Mammary epithelial cell (primary cell): ENCODE measurements at regions of chr14 and their contacts with region 1.

Region 1: GRCh38 chr14:58297762-58298476 is 436 bp upstream of the ARID4A start:
- DNase-seq: peak; percentile 100
- H3K4me3 ChIP-seq: peak overlapping the region; percentile 94 to 96 (median 95)
- H3K27ac ChIP-seq: peak overlapping the region; percentile 84
- H3K4me1 ChIP-seq: peaks cover 10% of the 10 kb centered on the region
- H3K27me3 ChIP-seq: no peaks in the 10 kb centered on the region
- CTCF ChIP-seq: peak in 1 of 2 donors; percentile 12

Region 2: GRCh38 chr14:58244556-58245387 is 53.1 kb before region 1 on chr14 and contains the start of gene PSMA3:
- CTCF ChIA-PET with region 1: no interaction called
- dilution Hi-C with region 1: no loop called
- in situ Hi-C with region 1: no loop called
- intact Hi-C with region 1: loop called (anchors 2 kb)
- DNase-seq: peak; percentile 98
- H3K4me3 ChIP-seq: peak within 1 kb of the TSS; percentile 81 to 100 (median 96)
- H3K27ac ChIP-seq: peak within 1 kb of the TSS; percentile 93
- H3K4me1 ChIP-seq: peaks cover 18% of the 10 kb centered on the region
- H3K27me3 ChIP-seq: no peaks in the 10 kb centered on the region
- CTCF ChIP-seq: peak in 1 of 2 donors; percentile 16
- total RNA-seq, gene PSMA3: 69.8 to 157 TPM

Region 3: DNA sequence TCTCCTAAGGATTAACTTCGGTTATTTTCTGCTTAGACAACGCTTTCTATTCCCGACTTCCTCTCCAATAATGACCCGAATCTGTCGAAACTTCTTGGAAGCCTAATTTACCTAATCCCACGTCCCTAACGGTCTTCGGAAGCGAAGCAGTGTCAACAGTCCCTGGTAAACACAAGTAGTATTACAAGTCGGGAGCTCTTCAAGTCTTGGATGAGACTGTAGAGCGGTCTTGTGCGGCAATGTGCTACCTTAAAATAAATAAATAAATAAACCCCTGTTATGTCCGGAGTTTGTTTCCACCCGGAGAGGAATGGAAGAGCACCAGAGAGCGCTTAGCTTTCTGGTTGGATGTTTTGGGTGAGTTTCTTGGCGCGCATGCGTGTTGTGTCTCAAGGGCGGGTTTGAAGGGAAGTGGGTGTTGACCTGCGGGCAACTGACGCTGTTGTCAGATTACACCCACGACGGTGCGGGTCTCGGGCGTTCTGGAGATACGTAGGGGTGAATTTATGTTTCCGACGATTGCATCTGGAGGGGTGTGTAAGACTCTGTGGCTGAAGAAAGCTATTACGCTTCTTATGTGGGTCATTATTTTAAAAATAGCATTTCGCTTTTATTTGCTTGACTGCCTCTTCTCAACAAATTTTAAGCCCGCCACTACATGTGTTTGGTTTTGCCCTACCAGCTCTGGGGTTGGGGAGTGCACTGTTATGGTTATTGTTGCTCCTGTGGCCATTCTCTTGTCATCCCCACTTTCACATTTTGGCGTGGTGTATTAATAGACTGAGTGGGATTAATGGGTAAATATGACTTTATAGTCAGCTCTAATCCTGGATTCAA is 129.6 kb after region 1 on chr14 and contains the starts of genes KIAA0586 and TIMM9:
- CTCF ChIA-PET with region 1: no interaction called
- dilution Hi-C with region 1: no loop called
- in situ Hi-C with region 1: no loop called
- intact Hi-C with region 1: loop called (anchors 10 kb)
- DNase-seq: peak; percentile 97
- H3K4me3 ChIP-seq: peak within 1 kb of the TSS; percentile 87 to 95 (median 93)
- H3K27ac ChIP-seq: peak within 1 kb of the TSS; percentile 97
- H3K4me1 ChIP-seq: peaks cover 22% of the 10 kb centered on the region
- H3K27me3 ChIP-seq: no peaks in the 10 kb centered on the region
- CTCF ChIP-seq: no peak
- total RNA-seq, gene KIAA0586: 14.3 to 16.2 TPM
- total RNA-seq, gene TIMM9: 39.5 to 50.8 TPM